Activated naive CD4-positive, alpha-beta T cell treated with anti-CD3 and anti-CD28 coated beads for 36 hours (primary cell): ENCODE measurements at regions of chr16 and their contacts with region 1.

Region 1: DNA sequence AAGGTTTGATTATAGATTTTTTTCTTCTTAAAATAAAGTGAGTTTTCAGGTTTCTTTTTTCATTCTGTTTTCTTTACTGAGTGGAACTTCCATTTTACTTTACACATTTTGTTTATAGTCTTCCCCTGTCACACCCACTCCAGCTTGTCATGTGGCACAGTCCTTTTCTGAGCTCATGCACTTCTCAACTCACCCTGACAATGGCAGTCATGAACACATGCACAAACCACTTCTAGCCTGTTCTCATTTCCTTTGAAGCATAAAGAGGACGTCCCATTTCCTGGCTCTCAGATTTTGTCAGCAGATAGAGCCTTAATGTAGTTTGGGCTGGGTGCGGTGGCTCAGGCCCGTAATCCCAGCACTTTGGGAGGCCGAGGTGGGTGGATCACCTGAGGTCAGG is 168.0 kb downstream of the AHSP start:
- DNase-seq: peak; percentile 75
- H3K4me3 Mint-ChIP-seq: no peak overlapping the region
- H3K27ac Mint-ChIP-seq: no peak overlapping the region
- H3K4me1 Mint-ChIP-seq: peaks cover 5% of the 10 kb centered on the region
- H3K27me3 Mint-ChIP-seq: no peaks in the 10 kb centered on the region

Region 2: GRCh38 chr16:31641279-31641678 is 54.4 kb before region 1 on chr16:
- CTCF ChIA-PET with region 1: no interaction called
- intact Hi-C with region 1: no loop called
- DNase-seq: no peak
- H3K4me3 Mint-ChIP-seq: no peak overlapping the region
- H3K27ac Mint-ChIP-seq: no peak overlapping the region
- H3K4me1 Mint-ChIP-seq: no peaks in the 10 kb centered on the region
- H3K27me3 Mint-ChIP-seq: no peaks in the 10 kb centered on the region

Region 3: GRCh38 chr16:31713071-31713944 is 17.6 kb after region 1 on chr16:
- CTCF ChIA-PET with region 1: interaction called, 4 read pairs
- intact Hi-C with region 1: loop called (anchors 1 kb)
- DNase-seq: peak; percentile 97
- H3K4me3 Mint-ChIP-seq: peak overlapping the region; percentile 97
- H3K27ac Mint-ChIP-seq: peak overlapping the region; percentile 97
- H3K4me1 Mint-ChIP-seq: peaks cover 44% of the 10 kb centered on the region
- H3K27me3 Mint-ChIP-seq: no peaks in the 10 kb centered on the region